Activated CD4-positive, alpha-beta memory T cell treated with anti-CD3 and anti-CD28 coated beads for 36 hours (primary cell): ENCODE measurements at regions of chr12 and their contacts with region 1.

Region 1: DNA sequence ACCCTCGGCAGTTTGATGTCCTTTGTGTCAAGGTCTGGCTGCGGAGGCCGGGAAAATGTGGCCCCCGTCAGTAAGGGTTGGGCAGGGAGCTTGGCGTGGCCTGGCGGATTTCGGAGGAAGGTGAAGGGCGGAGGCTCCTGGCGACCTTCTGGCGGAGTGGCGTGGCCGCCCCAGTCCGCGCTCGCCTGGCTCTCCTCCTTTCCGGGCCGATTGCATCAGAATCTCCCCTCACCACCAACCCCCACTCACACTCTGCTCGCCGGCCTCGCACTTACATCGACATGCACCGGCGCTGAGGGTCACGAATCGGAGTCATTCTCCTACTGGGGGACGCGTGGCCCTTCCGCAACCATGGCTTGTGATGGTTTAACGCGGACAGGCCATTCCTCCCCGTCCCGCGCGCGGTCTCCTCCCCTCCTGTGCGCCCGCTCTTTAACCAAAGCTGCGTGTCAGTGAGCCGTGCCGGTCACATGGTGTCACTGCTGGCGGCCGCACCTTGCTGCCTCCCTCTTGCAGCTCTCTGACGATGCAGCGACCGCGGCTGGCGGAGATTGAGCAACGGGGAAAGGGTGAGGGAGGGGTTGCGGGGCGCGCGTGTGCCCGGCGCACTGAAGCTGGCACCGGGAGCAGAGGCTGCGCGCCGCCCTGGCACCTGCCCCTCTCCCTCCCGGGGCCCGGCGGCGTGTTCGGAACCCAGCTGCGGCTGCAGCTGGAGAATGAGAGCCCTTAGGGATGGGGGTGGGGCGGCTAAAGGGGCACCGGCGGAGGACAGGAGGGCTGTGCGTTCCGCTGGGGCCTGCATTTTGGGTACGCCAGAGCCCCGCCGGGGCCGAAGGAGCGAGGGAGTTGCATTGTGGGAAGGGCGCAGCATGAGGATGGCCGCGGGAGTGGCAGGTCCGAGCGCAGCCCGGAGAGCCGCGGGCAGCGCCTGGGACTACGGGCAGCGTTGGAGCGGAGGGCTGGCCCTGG is at the start of gene SLC38A1:
- DNase-seq: peak; percentile 92
- H3K4me3 Mint-ChIP-seq: no peak within 1 kb of the TSS
- H3K27ac Mint-ChIP-seq: no peak within 1 kb of the TSS
- H3K4me1 Mint-ChIP-seq: peaks cover 23% of the 10 kb centered on the region
- H3K27me3 Mint-ChIP-seq: no peaks in the 10 kb centered on the region
- total RNA-seq, gene SLC38A1: 142 TPM

Region 2: GRCh38 chr12:46209914-46210872 is 58.7 kb before region 1 on chr12:
- CTCF ChIA-PET with region 1: interaction called, 11 read pairs
- POLR2A ChIA-PET with region 1: interaction called, 177 read pairs
- intact Hi-C with region 1: loop called (anchors 1 kb)
- DNase-seq: peak; percentile 82
- H3K4me3 Mint-ChIP-seq: peak overlapping the region; percentile 40
- H3K27ac Mint-ChIP-seq: peak overlapping the region; percentile 98
- H3K4me1 Mint-ChIP-seq: peaks cover 74% of the 10 kb centered on the region
- H3K27me3 Mint-ChIP-seq: no peaks in the 10 kb centered on the region

Region 3: DNA sequence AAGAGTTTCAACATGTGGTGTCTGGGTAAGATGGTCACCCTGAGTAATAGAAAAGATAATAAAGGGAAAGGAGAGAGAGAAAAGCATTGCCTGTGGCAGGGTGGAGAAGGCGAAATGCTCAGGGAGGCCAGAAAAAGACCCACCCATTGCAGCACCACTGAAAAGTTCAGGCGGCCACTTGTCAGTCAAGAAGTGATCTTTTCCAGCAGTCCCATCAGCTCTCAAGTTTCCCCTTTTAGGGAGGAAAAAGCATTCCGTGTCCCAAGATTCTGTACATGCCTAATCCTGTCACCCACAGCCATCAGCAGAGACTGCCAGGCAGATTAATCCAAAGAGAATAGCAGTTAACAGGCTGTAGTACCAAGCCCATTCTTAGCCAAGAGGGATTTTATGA is 12.0 kb before region 1 on chr12:
- CTCF ChIA-PET with region 1: no interaction called
- POLR2A ChIA-PET with region 1: interaction called, 7 read pairs
- intact Hi-C with region 1: loop called (anchors 1 kb)
- DNase-seq: no peak
- H3K4me3 Mint-ChIP-seq: no peak overlapping the region
- H3K27ac Mint-ChIP-seq: peak overlapping the region; percentile 53
- H3K4me1 Mint-ChIP-seq: peaks cover 57% of the 10 kb centered on the region
- H3K27me3 Mint-ChIP-seq: no peaks in the 10 kb centered on the region

Region 4: DNA sequence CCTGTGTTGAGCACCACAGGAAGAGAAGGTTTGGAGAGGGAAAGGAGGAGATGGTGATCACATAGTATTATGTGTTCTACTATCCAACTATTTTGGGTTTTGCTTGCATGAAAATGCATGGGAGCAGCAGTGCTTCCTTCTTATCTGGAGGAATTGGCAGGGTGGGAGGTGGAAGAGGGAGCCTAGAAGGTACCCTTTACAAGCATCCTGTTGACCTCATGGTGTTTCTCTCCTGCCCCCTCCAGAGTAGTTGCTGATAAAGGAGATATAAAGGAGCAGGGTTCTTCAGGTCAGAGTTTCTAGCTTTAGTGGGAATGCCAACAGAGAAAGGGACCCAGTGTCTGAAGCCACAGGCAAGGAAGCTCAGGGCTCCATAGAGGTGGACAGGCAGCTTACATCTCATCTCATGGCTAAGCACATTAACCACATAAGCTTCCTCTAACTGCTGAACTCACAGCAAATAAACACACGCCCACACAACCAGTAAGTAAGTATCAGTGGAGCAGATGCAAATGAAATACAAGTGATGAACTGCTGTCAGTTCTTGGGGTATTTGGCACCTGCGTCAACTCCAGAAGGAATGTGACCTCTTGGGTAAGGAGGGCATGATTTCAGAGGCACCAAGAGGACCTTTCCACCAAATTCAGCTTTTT is 277.9 kb after region 1 on chr12:
- CTCF ChIA-PET with region 1: no interaction called
- POLR2A ChIA-PET with region 1: interaction called, 3 read pairs
- intact Hi-C with region 1: loop called (anchors 5 kb)
- DNase-seq: peak; percentile 38
- H3K4me3 Mint-ChIP-seq: no peak overlapping the region
- H3K27ac Mint-ChIP-seq: peak overlapping the region; percentile 51
- H3K4me1 Mint-ChIP-seq: peaks cover 55% of the 10 kb centered on the region
- H3K27me3 Mint-ChIP-seq: no peaks in the 10 kb centered on the region

Region 5: GRCh38 chr12:47216150-47216677 is 947.3 kb after region 1 on chr12:
- CTCF ChIA-PET with region 1: no interaction called
- POLR2A ChIA-PET with region 1: interaction called, 3 read pairs
- intact Hi-C with region 1: loop called (anchors 2 kb)
- DNase-seq: peak; percentile 87
- H3K4me3 Mint-ChIP-seq: peak overlapping the region; percentile 85
- H3K27ac Mint-ChIP-seq: peak overlapping the region; percentile 96
- H3K4me1 Mint-ChIP-seq: peaks cover 19% of the 10 kb centered on the region
- H3K27me3 Mint-ChIP-seq: no peaks in the 10 kb centered on the region